K562 (cell line): ENCODE measurements at regions of chr6 and their contacts with region 1.

Region 1: DNA sequence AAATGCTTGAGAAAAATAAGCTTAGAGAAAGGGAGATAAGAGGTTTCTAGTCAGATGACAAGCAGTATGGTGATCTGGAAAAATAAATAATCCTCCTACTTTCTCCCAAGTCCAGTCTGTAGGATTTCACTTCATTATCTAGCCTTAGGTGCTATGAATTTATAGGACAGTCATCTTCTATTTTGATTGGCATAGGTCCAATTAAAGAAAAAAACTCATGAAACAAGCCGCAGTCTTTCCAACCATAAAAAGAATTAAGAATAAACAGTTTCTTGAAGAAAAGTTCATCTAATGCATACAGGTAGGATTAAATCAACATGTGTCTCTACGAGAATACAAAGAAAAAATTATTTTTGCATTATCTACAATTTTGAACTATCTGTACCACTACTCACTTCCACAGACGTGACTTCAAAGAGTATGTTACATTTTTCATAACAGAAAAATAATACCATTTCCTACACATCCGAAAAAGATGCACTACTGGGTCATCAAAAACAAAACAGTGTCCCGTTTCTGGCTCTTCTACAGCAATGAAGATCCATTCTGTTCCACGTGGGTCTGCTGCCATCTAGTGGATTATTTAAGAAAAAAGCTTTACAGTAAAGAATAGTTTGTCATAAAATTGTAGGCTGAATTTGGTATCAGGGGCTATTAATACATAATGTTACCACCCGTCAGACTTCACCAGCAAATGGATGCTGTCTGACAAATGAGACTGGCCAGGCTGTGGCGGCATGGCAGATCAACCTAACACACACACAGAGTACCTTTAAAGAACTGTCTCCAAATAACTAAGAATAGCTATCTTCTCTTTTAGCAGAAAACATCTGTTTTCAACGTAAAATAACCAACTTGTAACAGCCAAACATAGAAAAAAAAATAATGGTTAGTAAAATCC is 28.9 kb downstream of the STX7 start:
- DNase-seq: peak; percentile 56 to 74 (median 64)
- ATAC-seq: peak; percentile 92
- H3K4me3 ChIP-seq: no peak overlapping the region
- H3K27ac ChIP-seq: no peak overlapping the region
- H3K4me1 ChIP-seq: peaks cover 0 to 4% of the 10 kb centered on the region in 2 experiments; a peak in 2 of 5 replicates
- H3K27me3 ChIP-seq: no peaks in the 10 kb centered on the region
- CTCF ChIP-seq: peak; percentile 60 to 82 (median 67); a peak in 5 of 6 replicates
- EP300 ChIP-seq: no peak
- POLR2A ChIP-seq: no peak
- RAD21 ChIP-seq: peak; percentile 66 to 70

Region 2: GRCh38 chr6:131914967-131915751 is 568.9 kb before region 1 on chr6:
- CTCF ChIA-PET with region 1: interaction called, 3 read pairs
- POLR2A ChIA-PET with region 1: no interaction called
- in situ Hi-C with region 1: loop called (anchors 5 kb)
- intact Hi-C with region 1: loop called (anchors 10 kb)
- DNase-seq: peak; percentile 41 to 69 (median 59)
- ATAC-seq: peak; percentile 90
- H3K4me3 ChIP-seq: no peak overlapping the region
- H3K27ac ChIP-seq: no peak overlapping the region
- H3K4me1 ChIP-seq: no peaks in the 10 kb centered on the region
- H3K27me3 ChIP-seq: no peaks in the 10 kb centered on the region; a peak in 1 of 5 replicates
- CTCF ChIP-seq: peak; percentile 60 to 82 (median 76)
- EP300 ChIP-seq: no peak
- POLR2A ChIP-seq: no peak
- RAD21 ChIP-seq: peak; percentile 51 to 64

Region 3: GRCh38 chr6:132279592-132280139 is 204.4 kb before region 1 on chr6:
- CTCF ChIA-PET with region 1: interaction called, 42 read pairs
- POLR2A ChIA-PET with region 1: no interaction called
- in situ Hi-C with region 1: loop called (anchors 5 kb)
- intact Hi-C with region 1: loop called (anchors 1 kb)
- DNase-seq: peak; percentile 55 to 83 (median 65)
- ATAC-seq: peak; percentile 94
- H3K4me3 ChIP-seq: peak overlapping the region; percentile 34
- H3K27ac ChIP-seq: no peak overlapping the region; the same call in 2 of the 3 replicates
- H3K4me1 ChIP-seq: no peaks in the 10 kb centered on the region
- H3K27me3 ChIP-seq: no peaks in the 10 kb centered on the region
- CTCF ChIP-seq: peak; percentile 69 to 96 (median 91)
- EP300 ChIP-seq: no peak
- POLR2A ChIP-seq: no peak
- RAD21 ChIP-seq: peak; percentile 80 to 82

Region 4: DNA sequence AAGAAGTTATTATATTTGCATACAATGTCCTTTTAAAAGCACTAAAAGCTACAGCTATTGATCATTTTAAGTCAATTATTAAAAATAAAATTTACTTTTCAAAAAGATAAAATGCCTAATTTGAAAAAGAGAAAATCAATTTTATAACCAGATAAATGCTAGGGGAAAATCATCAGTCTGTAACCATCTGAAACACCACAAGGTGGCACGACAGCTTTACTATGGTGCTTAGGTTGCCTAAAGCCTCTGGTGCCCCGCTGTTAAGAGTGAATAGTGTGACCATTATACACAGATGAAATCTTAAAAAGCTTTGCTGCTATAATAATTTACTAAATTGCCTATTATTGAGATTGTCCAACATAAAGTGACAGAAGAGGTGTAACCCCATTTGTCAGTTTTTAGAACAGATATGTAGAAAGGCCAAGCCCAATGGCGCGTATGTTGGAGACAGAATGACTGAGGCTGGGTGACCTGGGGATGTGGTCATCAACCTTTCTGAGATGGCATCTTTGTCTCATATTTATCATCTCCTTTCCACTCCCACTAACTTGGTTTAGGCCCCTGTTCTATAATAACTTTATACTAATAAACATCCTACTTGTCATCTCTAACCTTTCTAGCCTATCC is 183.6 kb before region 1 on chr6:
- CTCF ChIA-PET with region 1: interaction called, 21 read pairs
- POLR2A ChIA-PET with region 1: no interaction called
- in situ Hi-C with region 1: loop called (anchors 10 kb)
- intact Hi-C with region 1: loop called (anchors 1 kb)
- DNase-seq: peak in 3 of 4 experiments; percentile 23 to 44 (median 24)
- ATAC-seq: peak; percentile 91
- H3K4me3 ChIP-seq: no peak overlapping the region
- H3K27ac ChIP-seq: no peak overlapping the region
- H3K4me1 ChIP-seq: no peaks in the 10 kb centered on the region
- H3K27me3 ChIP-seq: no peaks in the 10 kb centered on the region
- CTCF ChIP-seq: peak; percentile 45 to 62 (median 50); a peak in 5 of 6 replicates
- EP300 ChIP-seq: no peak
- POLR2A ChIP-seq: no peak
- RAD21 ChIP-seq: peak; percentile 68 to 70

Region 5: GRCh38 chr6:132399376-132400074 is 84.5 kb before region 1 on chr6:
- CTCF ChIA-PET with region 1: no interaction called
- POLR2A ChIA-PET with region 1: no interaction called
- in situ Hi-C with region 1: no loop called
- intact Hi-C with region 1: loop called (anchors 5 kb)
- DNase-seq: no peak
- ATAC-seq: no peak
- H3K4me3 ChIP-seq: no peak overlapping the region
- H3K27ac ChIP-seq: no peak overlapping the region
- H3K4me1 ChIP-seq: peaks cover 0 to 11% of the 10 kb centered on the region in 2 experiments; a peak in 2 of 5 replicates
- H3K27me3 ChIP-seq: peaks cover 9 to 28% of the 10 kb centered on the region in 2 experiments; a peak in 4 of 5 replicates
- CTCF ChIP-seq: no peak
- EP300 ChIP-seq: no peak
- POLR2A ChIP-seq: no peak
- RAD21 ChIP-seq: no peak